Activated naive CD4-positive, alpha-beta T cell treated with anti-CD3 and anti-CD28 coated beads, Interleukin-2, amount 10 ng/mL, durations not matched to agents 7 days and 5 days (primary cell): ENCODE measurements at regions of chr12 and their contacts with region 1.

Region 1: GRCh38 chr12:85866986-85867776 is 6.9 kb upstream of the NTS start:
- DNase-seq: no peak
- H3K4me3 Mint-ChIP-seq: no peak overlapping the region
- H3K27ac Mint-ChIP-seq: no peak overlapping the region
- H3K4me1 Mint-ChIP-seq: no peaks in the 10 kb centered on the region
- H3K27me3 Mint-ChIP-seq: no peaks in the 10 kb centered on the region

Region 2: DNA sequence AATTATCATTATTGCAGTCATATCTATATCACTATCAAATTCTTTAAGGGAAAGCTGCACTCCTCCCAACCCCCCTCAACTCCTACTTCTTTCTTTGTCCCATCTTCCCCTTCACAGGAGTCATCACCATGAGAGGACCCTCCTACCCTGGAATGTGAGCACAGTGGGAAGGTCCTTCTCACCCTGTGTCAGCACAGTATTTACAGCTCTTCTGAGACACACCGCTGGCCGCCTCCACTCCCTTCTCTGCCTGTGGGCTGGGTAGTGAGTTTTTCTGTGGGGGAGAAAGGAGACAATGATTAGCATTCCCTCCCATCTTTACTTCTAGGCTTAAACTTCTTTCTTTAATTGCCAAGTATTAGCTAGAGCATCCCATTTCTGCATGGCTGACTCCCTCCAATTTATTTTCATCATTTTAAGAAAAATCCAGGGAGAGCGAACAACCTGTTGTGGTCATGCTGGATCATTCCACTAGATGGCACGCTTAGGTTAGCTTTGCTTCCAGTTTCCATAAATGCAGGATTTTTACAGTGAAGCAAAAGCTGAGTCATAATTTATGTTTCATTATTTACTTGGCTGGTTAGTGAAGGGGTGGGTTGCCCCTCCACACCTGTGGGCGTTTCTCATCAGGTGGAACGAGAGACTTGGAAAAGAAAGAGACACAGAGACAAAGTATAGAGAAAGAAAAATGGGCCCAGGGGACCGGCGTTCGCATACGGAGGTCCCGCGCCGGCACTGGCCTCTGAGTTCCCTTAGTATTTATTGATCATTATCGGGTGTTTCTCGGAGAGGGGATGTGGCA is 398.6 kb before region 1 on chr12:
- CTCF ChIA-PET with region 1: interaction called, 21 read pairs
- DNase-seq: peak; percentile 57
- H3K4me3 Mint-ChIP-seq: peak overlapping the region; percentile 71
- H3K27ac Mint-ChIP-seq: no peak overlapping the region
- H3K4me1 Mint-ChIP-seq: peaks cover 13% of the 10 kb centered on the region
- H3K27me3 Mint-ChIP-seq: peaks cover 3% of the 10 kb centered on the region